Activated T-helper 2 cell treated with anti-CD3 and anti-CD28 coated beads, Interferon-gamma antibody, Interleukin-2, Interleukin-4, amounts not matched to agents 10 μg/mL and 5 μg/mL and 100 μg/mL, durations not matched to agents 14 hours and 24 hours and 36 hours (primary cell): ENCODE measurements at regions of chr10 and their contacts with region 1.

Region 1: GRCh38 chr10:102231357-102232318 is 5.5 kb downstream of the ELOVL3 start:
- DNase-seq: peak; percentile 69
- H3K4me3 Mint-ChIP-seq: peak overlapping the region; percentile 62
- H3K27ac Mint-ChIP-seq: no peak overlapping the region
- H3K4me1 Mint-ChIP-seq: peaks cover 9% of the 10 kb centered on the region
- H3K27me3 Mint-ChIP-seq: peaks cover 55% of the 10 kb centered on the region

Region 2: DNA sequence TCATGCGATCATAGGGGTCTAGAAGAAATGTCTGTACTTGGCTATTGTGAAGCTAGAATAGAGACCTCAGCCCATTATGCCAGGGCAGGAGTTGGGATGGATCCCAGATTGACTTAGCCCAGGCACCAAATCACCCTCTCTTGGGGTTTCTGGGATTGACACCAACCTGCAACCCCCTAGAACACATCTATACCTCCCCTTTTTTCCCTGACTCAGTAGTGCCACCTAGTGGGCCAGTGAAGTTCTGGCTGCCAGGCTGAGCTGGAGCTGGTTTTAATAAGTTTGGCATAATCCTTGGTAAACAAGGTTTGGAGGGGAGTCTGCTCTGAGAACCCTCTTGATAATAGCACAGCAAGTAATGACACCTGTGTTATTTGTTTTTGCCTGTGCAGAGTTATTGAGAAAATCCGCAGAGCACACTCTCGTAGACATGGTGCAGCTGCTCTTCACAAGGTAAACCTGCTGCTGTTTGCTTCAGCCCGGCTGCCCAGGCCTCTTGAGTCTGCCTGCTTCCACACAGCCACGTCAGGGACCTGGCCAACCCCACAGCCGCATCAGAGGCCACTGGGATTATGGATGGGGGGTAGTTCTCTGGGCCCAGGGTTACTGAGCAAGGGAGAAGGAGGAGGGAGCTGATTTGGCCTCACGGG is 120.6 kb after region 1 on chr10:
- intact Hi-C with region 1: loop called (anchors 1 kb)
- DNase-seq: peak; percentile 38
- H3K4me3 Mint-ChIP-seq: no peak overlapping the region
- H3K27ac Mint-ChIP-seq: no peak overlapping the region
- H3K4me1 Mint-ChIP-seq: no peaks in the 10 kb centered on the region
- H3K27me3 Mint-ChIP-seq: no peaks in the 10 kb centered on the region